Gastrocnemius medialis (tissue), 4 donors: ENCODE measurements at regions of chr17 and their contacts with region 1.

Region 1: GRCh38 chr17:42183741-42184711 is 1.2 kb downstream of the HCRT start:
- DNase-seq: peak; percentile 24 to 61
- ATAC-seq: peak; percentile 60 to 81
- H3K4me3 ChIP-seq: peak overlapping the region; percentile 46 to 82 (median 60)
- H3K27ac ChIP-seq: peak overlapping the region in 3 of 4 donors; percentile 44 to 67 (median 56)
- H3K4me1 ChIP-seq: peaks cover 15 to 16% of the 10 kb centered on the region in 2 donors
- H3K27me3 ChIP-seq: peaks cover 21 to 30% (median 23%) of the 10 kb centered on the region in 3 donors
- CTCF ChIP-seq: peak; percentile 70 to 92 (median 91)
- POLR2A ChIP-seq: peak in 1 of 2 donors; percentile 12

Region 2: GRCh38 chr17:42120770-42121769 is 63.0 kb before region 1 on chr17 and contains the start of gene KAT2A:
- in situ Hi-C with region 1: no loop called
- intact Hi-C with region 1: loop called (anchors 5 kb)
- DNase-seq: peak; percentile 55 to 83
- ATAC-seq: peak; percentile 73 to 78
- H3K4me3 ChIP-seq: peak within 1 kb of the TSS; percentile 70 to 95 (median 85)
- H3K27ac ChIP-seq: peak within 1 kb of the TSS; percentile 73 to 83 (median 76)
- H3K4me1 ChIP-seq: peaks cover 13 to 24% of the 10 kb centered on the region in 2 donors
- H3K27me3 ChIP-seq: no peaks in the 10 kb centered on the region
- CTCF ChIP-seq: no peak
- POLR2A ChIP-seq: peak; percentile 17 to 18
- total RNA-seq, gene KAT2A: 1.8 to 15.0 (median 6.3) TPM